Panc1 (cell line): ENCODE measurements at regions of chr7 and their contacts with region 1.

Region 1: GRCh38 chr7:35757574-35757973 is 43.3 kb upstream of the SEPTIN7 start:
- DNase-seq: no peak
- ATAC-seq: no peak
- H3K4me3 ChIP-seq: no peak overlapping the region
- H3K27ac ChIP-seq: no peak overlapping the region
- H3K4me1 ChIP-seq: no peaks in the 10 kb centered on the region
- H3K27me3 ChIP-seq: peaks cover 27% of the 10 kb centered on the region
- CTCF ChIP-seq: no peak

Region 2: DNA sequence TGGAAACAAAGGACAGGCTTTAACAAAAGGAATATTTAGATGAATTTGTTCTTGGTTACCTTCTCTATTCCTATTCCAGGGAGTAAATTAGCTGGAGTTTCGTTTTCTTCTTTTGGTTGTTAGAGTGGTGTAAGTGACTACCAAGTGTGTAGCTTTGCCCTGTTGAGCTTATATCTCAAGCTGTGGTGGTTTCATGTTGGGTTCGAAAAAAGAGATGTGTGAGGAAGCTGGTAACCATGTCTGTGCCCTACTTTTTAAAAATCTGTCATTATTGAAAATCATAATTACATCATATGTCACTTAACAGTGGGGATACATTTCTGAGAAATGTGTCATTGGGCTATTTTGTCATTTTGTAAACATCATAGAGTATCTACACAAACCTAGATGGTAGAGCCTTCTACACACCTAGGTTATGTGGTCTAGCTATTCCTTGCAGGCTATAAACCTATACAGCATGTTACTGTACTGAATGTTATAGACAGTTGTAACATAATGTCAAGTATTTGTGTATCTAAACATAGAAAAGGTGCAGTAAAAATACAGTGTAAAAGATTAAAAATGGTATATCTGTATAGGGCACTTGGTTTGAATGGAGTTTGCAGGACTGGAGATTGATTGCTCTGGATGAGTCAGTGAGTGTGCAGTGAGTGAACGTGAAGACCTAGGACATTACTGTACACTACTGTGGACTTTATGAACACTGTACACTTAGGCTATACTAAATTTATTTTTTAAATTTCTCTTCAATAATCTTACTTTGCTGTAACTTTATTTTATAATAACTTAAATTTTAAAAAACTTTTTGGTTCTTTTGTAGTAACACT is 133.6 kb after region 1 on chr7:
- CTCF ChIA-PET with region 1: no interaction called
- POLR2A ChIA-PET with region 1: interaction called, 14 read pairs
- in situ Hi-C with region 1: no loop called
- intact Hi-C with region 1: no loop called
- DNase-seq: no peak
- ATAC-seq: no peak
- H3K4me3 ChIP-seq: no peak overlapping the region
- H3K27ac ChIP-seq: no peak overlapping the region
- H3K4me1 ChIP-seq: no peaks in the 10 kb centered on the region
- H3K27me3 ChIP-seq: no peaks in the 10 kb centered on the region
- CTCF ChIP-seq: no peak